Activated CD4-positive, alpha-beta T cell treated with anti-CD3 and anti-CD28 coated beads for 36 hours (primary cell): ENCODE measurements at regions of chr1 and their contacts with region 1.

Region 1: GRCh38 chr1:167553136-167554027 is at the start of gene CREG1:
- DNase-seq: peak; percentile 94
- ATAC-seq: peak; percentile 100
- H3K4me3 Mint-ChIP-seq: peak within 1 kb of the TSS; percentile 77
- H3K27ac Mint-ChIP-seq: peak within 1 kb of the TSS; percentile 38
- H3K4me1 Mint-ChIP-seq: peaks cover 33% of the 10 kb centered on the region
- H3K27me3 Mint-ChIP-seq: no peaks in the 10 kb centered on the region
- total RNA-seq, gene CREG1: 8.8 to 9.4 TPM

Region 2: DNA sequence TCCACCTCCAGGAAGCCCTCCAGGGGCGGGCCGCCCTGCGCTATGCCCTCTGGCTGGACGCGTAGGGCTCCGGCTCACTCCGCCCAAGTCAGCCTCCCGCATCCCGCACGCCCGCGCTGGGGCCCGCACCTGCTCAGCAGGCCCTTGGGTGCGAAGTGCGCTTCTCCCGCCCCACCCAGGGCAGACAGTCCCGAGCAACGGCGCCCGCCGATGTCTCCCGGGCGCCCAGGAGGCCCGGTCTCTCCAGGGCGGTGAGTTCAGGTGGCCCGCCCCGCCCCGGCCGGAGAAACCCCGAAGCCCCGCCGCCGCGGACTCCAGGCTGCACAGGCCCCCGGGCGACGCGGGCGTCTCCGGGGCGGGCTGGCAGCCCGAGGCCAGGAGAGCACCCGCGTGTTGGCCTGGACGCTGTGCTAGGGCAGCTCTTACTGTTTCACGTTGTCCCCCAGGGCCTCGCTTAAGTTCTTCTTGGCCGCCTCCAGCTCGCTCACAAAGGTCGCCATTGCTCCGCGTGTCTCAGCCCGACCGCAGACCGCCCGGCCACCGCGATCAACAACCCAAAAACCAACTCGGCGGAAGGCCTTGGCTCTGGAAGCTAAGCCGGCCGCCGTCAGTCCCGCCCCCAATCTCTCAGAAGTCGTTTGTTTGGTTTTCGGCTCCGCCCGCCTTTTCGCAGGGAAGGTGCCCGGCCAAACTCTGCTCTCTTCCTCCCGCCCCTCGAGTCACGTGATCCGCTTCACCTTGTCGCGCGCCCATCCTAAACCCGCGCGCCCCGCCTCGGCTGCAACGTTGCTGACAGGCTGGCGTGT is 677.4 kb before region 1 on chr1 and contains the start of gene TADA1:
- CTCF ChIA-PET with region 1: interaction called, 3 read pairs
- POLR2A ChIA-PET with region 1: no interaction called
- intact Hi-C with region 1: loop called in 1 of 2 experiments (anchors 5 kb)
- DNase-seq: peak; percentile 100
- ATAC-seq: peak; percentile 91
- H3K4me3 Mint-ChIP-seq: peak within 1 kb of the TSS; percentile 92
- H3K27ac Mint-ChIP-seq: peak within 1 kb of the TSS; percentile 97
- H3K4me1 Mint-ChIP-seq: peaks cover 45% of the 10 kb centered on the region
- H3K27me3 Mint-ChIP-seq: no peaks in the 10 kb centered on the region
- total RNA-seq, gene TADA1: 16.0 to 19.5 TPM

Region 3: DNA sequence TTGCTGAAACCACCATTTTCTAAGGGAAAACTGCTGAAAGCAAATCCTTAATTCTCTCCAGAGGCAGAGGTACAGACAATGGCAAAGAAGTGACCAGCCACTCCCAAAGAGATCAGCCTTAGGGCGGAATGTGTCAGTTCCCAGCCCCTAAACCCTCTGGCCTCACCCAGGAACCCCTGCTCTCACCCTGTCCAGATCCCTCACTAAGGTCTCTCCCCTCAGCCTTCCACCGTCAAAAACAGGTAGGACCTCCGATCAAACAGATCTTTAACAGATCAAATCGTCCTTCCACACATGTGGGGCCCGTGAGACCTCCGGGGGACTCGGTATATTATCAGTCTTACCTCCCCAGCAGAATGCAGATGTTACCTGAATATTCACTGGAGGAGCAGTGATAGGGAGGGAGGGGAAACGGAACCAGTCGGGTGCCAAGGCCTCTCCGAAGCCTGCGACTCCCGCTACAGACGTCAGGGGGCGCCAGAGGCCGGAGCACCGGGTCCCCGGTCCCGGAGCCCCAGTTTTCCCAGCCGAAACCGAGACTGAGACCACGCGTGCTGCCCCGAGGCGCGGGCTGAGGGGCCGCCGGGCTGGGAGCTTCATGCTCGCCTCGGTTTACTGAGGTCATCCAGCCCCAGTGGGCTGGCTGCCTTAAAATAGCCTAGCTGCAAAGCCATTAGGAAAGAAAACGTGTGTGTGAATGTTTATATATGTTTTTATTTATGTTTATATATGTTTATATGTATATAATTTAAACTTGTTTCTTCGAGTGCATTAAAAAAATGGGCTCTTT is 486.9 kb before region 1 on chr1:
- CTCF ChIA-PET with region 1: interaction called, 3 read pairs
- POLR2A ChIA-PET with region 1: no interaction called
- intact Hi-C with region 1: loop called (anchors 1 to 5 kb)
- DNase-seq: peak; percentile 87
- ATAC-seq: peak; percentile 95
- H3K4me3 Mint-ChIP-seq: no peak overlapping the region
- H3K27ac Mint-ChIP-seq: no peak overlapping the region
- H3K4me1 Mint-ChIP-seq: no peaks in the 10 kb centered on the region
- H3K27me3 Mint-ChIP-seq: no peaks in the 10 kb centered on the region

Region 4: GRCh38 chr1:167288390-167289074 is 264.9 kb before region 1 on chr1:
- CTCF ChIA-PET with region 1: no interaction called
- POLR2A ChIA-PET with region 1: no interaction called
- intact Hi-C with region 1: no loop called
- DNase-seq: no peak
- ATAC-seq: no peak
- H3K4me3 Mint-ChIP-seq: no peak overlapping the region
- H3K27ac Mint-ChIP-seq: no peak overlapping the region
- H3K4me1 Mint-ChIP-seq: peaks cover 21% of the 10 kb centered on the region
- H3K27me3 Mint-ChIP-seq: no peaks in the 10 kb centered on the region

Region 5: DNA sequence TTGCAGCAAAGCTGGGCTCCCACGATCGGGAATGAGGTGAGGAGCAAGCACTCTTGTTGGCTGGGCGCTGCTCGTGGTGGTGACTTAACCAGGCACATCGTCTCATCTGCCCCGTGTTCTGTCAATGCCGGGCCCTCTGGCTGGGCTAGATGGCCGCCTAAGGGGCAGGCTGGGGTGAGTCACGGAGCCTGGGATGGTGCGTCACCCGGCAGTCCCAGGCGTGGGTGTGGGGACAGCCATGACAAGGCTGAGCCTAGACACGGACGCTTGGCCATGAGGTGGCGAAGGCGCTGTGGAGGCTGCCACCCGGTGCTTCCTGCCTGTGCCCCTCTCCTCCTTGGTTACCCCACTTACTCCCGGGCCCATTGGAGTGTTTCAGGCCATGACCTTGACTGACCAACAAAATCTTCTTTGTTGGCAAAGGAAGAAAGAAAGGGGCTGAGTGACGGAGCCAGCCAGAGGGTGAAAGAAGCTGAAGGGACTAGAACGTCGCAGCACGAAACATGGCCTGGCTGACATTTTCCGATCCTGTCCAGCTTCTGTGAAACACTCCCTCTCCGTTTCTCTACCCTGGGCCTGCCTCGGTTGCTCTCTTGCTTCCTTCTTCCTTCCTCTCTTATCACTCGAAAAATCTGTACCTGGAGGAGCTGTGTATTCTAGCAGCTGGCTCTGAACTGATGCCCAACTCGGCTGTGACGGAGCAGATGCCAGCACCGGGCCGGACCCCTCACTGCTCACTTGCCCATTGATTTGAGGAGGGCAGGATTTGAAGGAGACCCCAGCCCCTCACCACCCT is 35.6 kb before region 1 on chr1:
- CTCF ChIA-PET with region 1: interaction called, 3 read pairs
- POLR2A ChIA-PET with region 1: no interaction called
- intact Hi-C with region 1: loop called in 1 of 2 experiments (anchors 1 kb)
- DNase-seq: peak; percentile 97
- ATAC-seq: peak; percentile 88
- H3K4me3 Mint-ChIP-seq: peak overlapping the region; percentile 90
- H3K27ac Mint-ChIP-seq: peak overlapping the region; percentile 99
- H3K4me1 Mint-ChIP-seq: peaks cover 43% of the 10 kb centered on the region
- H3K27me3 Mint-ChIP-seq: no peaks in the 10 kb centered on the region

Region 6: DNA sequence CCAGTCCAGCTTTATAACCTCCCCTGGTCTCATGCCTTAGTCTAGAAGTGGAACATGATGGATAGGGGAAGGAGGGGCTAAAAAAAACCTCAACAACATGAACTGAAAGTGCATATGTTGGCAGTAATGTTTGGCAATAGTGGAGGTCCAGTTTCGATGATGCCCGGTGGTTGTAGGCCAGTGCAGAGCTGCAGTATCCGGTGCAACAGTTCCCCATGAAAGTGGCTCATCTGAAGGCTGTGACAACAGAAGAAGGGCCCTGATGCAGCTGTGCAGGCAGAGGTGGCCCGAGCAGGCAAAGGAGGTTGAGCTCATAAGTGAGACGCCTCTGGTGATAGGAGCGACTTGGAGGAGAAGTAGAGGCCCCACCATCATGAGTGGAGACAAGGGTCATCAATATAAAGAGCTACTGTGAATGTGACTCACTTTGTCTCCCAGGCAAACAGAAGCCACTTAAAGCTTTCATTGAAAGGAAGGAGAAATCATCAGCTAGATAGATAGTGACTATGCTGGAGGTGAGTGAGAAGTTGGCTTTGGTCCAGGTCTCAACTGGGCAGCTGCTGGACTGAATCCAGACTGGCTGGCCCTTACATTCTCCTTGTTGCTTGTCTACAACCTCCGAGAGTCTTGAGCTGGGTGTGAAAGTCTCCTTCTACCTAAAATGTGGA is 10.3 kb after region 1 on chr1:
- CTCF ChIA-PET with region 1: interaction called, 10 read pairs
- POLR2A ChIA-PET with region 1: interaction called, 5 read pairs
- intact Hi-C with region 1: no loop called
- DNase-seq: no peak
- ATAC-seq: no peak
- H3K4me3 Mint-ChIP-seq: no peak overlapping the region
- H3K27ac Mint-ChIP-seq: no peak overlapping the region
- H3K4me1 Mint-ChIP-seq: no peaks in the 10 kb centered on the region
- H3K27me3 Mint-ChIP-seq: no peaks in the 10 kb centered on the region

Region 7: DNA sequence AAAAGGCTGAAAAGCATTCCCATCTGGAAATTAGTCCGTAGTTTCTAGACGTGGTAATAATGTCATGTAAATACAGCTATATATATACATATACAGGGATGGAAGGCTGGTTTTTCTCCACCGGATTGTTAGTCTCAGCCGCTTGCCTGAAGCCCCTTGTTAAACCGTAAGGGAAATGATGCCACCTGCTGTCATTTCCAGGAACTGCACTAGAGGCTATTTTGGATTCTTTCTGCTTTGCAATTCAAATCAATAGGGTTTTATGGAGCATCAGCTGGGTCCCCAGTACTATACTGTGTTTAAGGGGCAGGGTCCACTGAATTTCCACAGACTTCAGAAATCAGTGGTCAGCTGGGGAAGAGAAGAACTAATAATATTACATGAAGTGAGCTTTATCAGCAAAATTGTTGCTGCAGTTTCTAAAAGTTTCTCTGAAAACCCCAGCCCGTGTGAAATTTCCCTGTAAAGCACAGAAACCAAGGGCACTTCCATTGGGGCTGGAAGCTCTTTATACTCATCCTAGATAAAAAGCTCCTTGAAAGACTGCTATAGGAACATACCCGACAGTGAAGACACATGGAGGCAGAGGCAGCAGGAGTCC is 134.6 kb after region 1 on chr1:
- CTCF ChIA-PET with region 1: interaction called, 33 read pairs
- POLR2A ChIA-PET with region 1: no interaction called
- intact Hi-C with region 1: loop called (anchors 1 kb)
- DNase-seq: peak; percentile 87
- ATAC-seq: peak; percentile 76
- H3K4me3 Mint-ChIP-seq: no peak overlapping the region
- H3K27ac Mint-ChIP-seq: no peak overlapping the region
- H3K4me1 Mint-ChIP-seq: peaks cover 25% of the 10 kb centered on the region
- H3K27me3 Mint-ChIP-seq: no peaks in the 10 kb centered on the region